CD4-positive, alpha-beta T cell (primary cell): ENCODE measurements at regions of chr5 and their contacts with region 1.

Region 1: GRCh38 chr5:21574981-21575380 is 1278.2 kb downstream of the CDH12 start:
- DNase-seq: no peak
- ATAC-seq: no peak
- H3K4me3 ChIP-seq: no peak overlapping the region
- H3K4me3 Mint-ChIP-seq: no peak overlapping the region
- H3K27ac ChIP-seq: no peak overlapping the region
- H3K27ac Mint-ChIP-seq: no peak overlapping the region
- H3K4me1 ChIP-seq: no peaks in the 10 kb centered on the region
- H3K4me1 Mint-ChIP-seq: no peaks in the 10 kb centered on the region
- H3K27me3 ChIP-seq: no peaks in the 10 kb centered on the region
- H3K27me3 Mint-ChIP-seq: no peaks in the 10 kb centered on the region
- CTCF ChIP-seq: no peak

Region 2: DNA sequence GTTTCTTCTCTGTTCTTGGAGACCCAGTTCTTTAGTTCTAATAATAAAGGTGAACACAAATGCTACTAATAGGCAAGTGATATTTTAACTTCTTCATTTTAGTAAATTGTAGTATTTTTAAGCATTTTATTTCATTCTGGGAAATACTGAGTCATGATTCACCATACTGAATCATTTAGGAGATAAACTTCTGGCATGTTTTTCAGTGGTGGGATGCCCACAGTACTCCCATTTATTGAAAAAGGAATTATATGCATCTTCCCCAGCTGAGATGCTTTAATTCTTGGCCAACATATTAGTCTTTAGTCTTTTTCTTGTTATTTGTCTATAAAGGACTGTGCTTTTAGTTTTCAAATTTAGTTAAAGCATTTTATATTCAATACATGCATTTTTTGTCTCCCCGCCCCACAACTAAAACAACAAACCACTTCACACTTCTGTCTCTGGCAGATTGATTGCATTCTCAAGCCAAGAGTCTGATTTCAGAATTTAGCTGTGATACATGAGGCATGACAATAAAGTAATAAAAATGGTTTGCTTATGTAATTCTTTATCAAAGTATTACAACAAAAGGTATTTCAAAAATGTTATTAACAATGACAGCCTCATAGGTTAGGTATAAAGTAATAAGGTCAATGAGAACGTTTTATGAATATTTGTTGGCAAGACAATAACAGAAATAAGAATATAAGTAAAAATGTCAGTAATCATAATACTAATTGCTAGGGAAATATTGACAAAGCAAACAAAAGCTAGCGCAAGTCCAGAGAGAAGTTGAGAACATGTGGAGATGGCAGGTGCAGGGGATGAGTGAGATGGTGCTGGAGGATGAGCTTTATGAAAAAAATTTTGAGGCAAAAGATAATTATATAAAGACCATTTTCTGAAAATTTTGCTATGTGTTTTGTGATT is 1461.7 kb before region 1 on chr5:
- CTCF ChIA-PET with region 1: no interaction called
- POLR2A ChIA-PET with region 1: no interaction called
- intact Hi-C with region 1: loop called in 1 of 2 experiments (anchors 10 kb)
- DNase-seq: no peak
- ATAC-seq: no peak
- H3K4me3 ChIP-seq: no peak overlapping the region
- H3K4me3 Mint-ChIP-seq: no peak overlapping the region
- H3K27ac ChIP-seq: no peak overlapping the region
- H3K27ac Mint-ChIP-seq: no peak overlapping the region
- H3K4me1 ChIP-seq: no peaks in the 10 kb centered on the region
- H3K4me1 Mint-ChIP-seq: no peaks in the 10 kb centered on the region
- H3K27me3 ChIP-seq: no peaks in the 10 kb centered on the region
- H3K27me3 Mint-ChIP-seq: no peaks in the 10 kb centered on the region
- CTCF ChIP-seq: no peak

Region 3: GRCh38 chr5:22249209-22249608 is 674.2 kb after region 1 on chr5:
- CTCF ChIA-PET with region 1: no interaction called
- POLR2A ChIA-PET with region 1: no interaction called
- intact Hi-C with region 1: no loop called
- DNase-seq: no peak
- ATAC-seq: no peak
- H3K4me3 ChIP-seq: no peak overlapping the region
- H3K4me3 Mint-ChIP-seq: no peak overlapping the region
- H3K27ac ChIP-seq: no peak overlapping the region
- H3K27ac Mint-ChIP-seq: no peak overlapping the region
- H3K4me1 ChIP-seq: no peaks in the 10 kb centered on the region
- H3K4me1 Mint-ChIP-seq: no peaks in the 10 kb centered on the region
- H3K27me3 ChIP-seq: no peaks in the 10 kb centered on the region
- H3K27me3 Mint-ChIP-seq: no peaks in the 10 kb centered on the region
- CTCF ChIP-seq: no peak